Mammary epithelial cell (primary cell): ENCODE measurements at regions of chrX and their contacts with region 1.

Region 1: GRCh38 chrX:72181178-72182125 is at the start of gene PIN4:
- DNase-seq: peak; percentile 93
- H3K4me3 ChIP-seq: peak within 1 kb of the TSS; percentile 67 to 82 (median 81)
- H3K27ac ChIP-seq: peak within 1 kb of the TSS; percentile 63
- H3K4me1 ChIP-seq: peaks cover 5% of the 10 kb centered on the region
- H3K27me3 ChIP-seq: no peaks in the 10 kb centered on the region
- CTCF ChIP-seq: no peak
- total RNA-seq, gene PIN4: 3.0 to 5.5 TPM

Region 2: DNA sequence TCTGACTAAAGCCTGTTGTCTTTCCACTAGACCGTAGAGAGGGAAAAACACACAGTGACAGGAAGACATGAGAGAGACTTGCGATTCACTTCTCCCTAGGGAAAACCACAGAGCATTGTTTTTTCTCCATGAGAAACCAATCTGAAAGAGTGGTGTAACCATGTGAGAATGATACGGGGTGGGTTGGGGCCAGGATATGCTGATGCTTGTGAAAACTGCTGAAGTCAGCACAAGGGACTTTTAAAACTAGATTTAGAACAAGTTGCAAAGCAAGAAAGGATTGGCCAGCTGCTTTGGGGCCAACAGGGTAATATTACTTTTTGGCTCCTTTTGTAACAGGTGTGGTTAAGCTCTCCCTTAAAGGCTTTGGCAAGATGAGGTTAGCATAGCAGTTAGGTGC is 204.7 kb before region 1 on chrX:
- CTCF ChIA-PET with region 1: no interaction called
- dilution Hi-C with region 1: no loop called
- in situ Hi-C with region 1: no loop called
- intact Hi-C with region 1: no loop called
- DNase-seq: no peak
- H3K4me3 ChIP-seq: no peak overlapping the region
- H3K27ac ChIP-seq: no peak overlapping the region
- H3K4me1 ChIP-seq: no peaks in the 10 kb centered on the region
- H3K27me3 ChIP-seq: peaks cover 3% of the 10 kb centered on the region
- CTCF ChIP-seq: no peak

Region 3: GRCh38 chrX:72238721-72239475 is 57.4 kb after region 1 on chrX and contains the start of gene ERCC6L:
- CTCF ChIA-PET with region 1: no interaction called
- dilution Hi-C with region 1: no loop called
- in situ Hi-C with region 1: no loop called
- intact Hi-C with region 1: loop called (anchors 2 kb)
- DNase-seq: peak; percentile 84
- H3K4me3 ChIP-seq: peak within 1 kb of the TSS; percentile 42 to 58 (median 52)
- H3K27ac ChIP-seq: peak within 1 kb of the TSS; percentile 52
- H3K4me1 ChIP-seq: no peaks in the 10 kb centered on the region
- H3K27me3 ChIP-seq: no peaks in the 10 kb centered on the region
- CTCF ChIP-seq: no peak
- total RNA-seq, gene ERCC6L: 0.17 to 7.0 TPM

Region 4: DNA sequence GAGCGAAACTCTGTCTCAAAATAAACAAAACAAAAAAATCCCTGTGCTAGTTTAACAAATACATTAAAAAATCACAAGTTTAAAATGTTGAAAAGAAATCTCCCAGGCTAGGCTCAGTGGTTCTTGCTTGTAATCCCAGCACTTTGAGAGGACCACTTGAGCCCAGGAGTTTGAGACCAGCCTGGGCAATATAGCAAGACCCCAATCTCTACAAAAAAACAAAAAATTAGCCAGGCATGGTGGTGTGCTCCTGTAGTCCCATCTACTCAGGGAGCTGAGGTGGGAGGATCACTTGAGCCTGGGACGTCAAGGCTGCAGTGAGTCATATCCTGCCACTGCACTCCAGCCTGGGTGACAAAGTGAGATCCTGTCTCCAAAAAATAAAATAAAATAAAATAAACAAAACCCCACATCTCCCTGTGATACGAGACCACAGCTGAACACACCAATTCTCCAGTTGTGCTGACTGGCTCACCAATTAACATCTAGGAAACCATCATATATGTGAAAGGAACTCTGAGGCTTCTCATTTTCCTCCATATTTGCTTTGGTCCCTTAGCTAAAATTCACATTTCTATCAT is 88.3 kb after region 1 on chrX:
- CTCF ChIA-PET with region 1: no interaction called
- dilution Hi-C with region 1: no loop called
- in situ Hi-C with region 1: no loop called
- intact Hi-C with region 1: loop called (anchors 10 kb)
- DNase-seq: peak; percentile 35
- H3K4me3 ChIP-seq: no peak overlapping the region
- H3K27ac ChIP-seq: no peak overlapping the region
- H3K4me1 ChIP-seq: peaks cover 53% of the 10 kb centered on the region
- H3K27me3 ChIP-seq: no peaks in the 10 kb centered on the region
- CTCF ChIP-seq: no peak

Region 5: GRCh38 chrX:72306851-72307645 is 125.6 kb after region 1 on chrX:
- CTCF ChIA-PET with region 1: no interaction called
- dilution Hi-C with region 1: no loop called
- in situ Hi-C with region 1: no loop called
- intact Hi-C with region 1: loop called (anchors 5 kb)
- DNase-seq: peak; percentile 70
- H3K4me3 ChIP-seq: peak overlapping the region; percentile 47 to 59 (median 56)
- H3K27ac ChIP-seq: no peak overlapping the region
- H3K4me1 ChIP-seq: peaks cover 23% of the 10 kb centered on the region
- H3K27me3 ChIP-seq: peaks cover 52% of the 10 kb centered on the region
- CTCF ChIP-seq: no peak